ENCODE measurements at regions of chr2 and their contacts with region 1.

Region 1: GRCh38 chr2:127415593-127416505 is 2.4 kb upstream of the PROC start:
- DNase-seq: peak; percentile 30 to 62
- ATAC-seq: peak; percentile 53 to 83 (median 76)
- H3K4me3 ChIP-seq: peak overlapping the region in 9 of 10 donors; percentile 40 to 62 (median 54)
- H3K27ac ChIP-seq: peak overlapping the region in 1 of 10 donors; percentile 2
- H3K4me1 ChIP-seq: peaks cover 8 to 47% (median 20%) of the 10 kb centered on the region in 9 donors
- H3K27me3 ChIP-seq: peaks cover 0 to 24% (median 16%) of the 10 kb centered on the region in 7 donors
- CTCF ChIP-seq: peak; percentile 34 to 73 (median 61)

Region 2: DNA sequence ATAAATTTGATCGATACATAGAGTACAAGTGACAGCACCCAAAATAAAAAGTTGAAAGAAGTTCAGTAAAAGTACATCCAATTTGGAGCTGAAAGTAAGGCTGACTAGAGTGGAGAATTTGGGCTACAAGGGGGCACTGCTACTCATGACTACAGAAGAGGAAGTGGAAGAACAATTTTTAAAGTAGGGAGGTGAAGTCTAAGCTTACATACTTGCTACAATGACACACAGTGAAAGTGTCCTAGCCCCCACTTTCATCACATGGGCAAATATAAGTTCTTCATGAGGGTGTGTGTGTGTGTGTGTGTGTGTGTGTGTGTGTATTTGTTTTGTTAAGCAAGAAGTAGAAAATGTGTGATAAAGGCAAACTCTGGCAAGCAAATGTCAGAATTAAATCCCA is 73.7 kb before region 1 on chr2:
- intact Hi-C with region 1: loop called in 1 of 10 experiments (anchors 10 kb)
- DNase-seq: no peak
- ATAC-seq: no peak
- H3K4me3 ChIP-seq: no peak overlapping the region
- H3K27ac ChIP-seq: no peak overlapping the region
- H3K4me1 ChIP-seq: peaks cover 0 to 13% (median 0%) of the 10 kb centered on the region in 9 donors
- H3K27me3 ChIP-seq: no peaks in the 10 kb centered on the region
- CTCF ChIP-seq: no peak

Region 3: GRCh38 chr2:127365211-127365643 is 50.6 kb before region 1 on chr2:
- intact Hi-C with region 1: loop called in 2 of 10 experiments (anchors 10 kb)
- DNase-seq: no peak
- ATAC-seq: peak in 3 of 8 donors; percentile 7 to 26 (median 22)
- H3K4me3 ChIP-seq: no peak overlapping the region
- H3K27ac ChIP-seq: no peak overlapping the region
- H3K4me1 ChIP-seq: peaks cover 0 to 66% (median 24%) of the 10 kb centered on the region in 9 donors
- H3K27me3 ChIP-seq: no peaks in the 10 kb centered on the region
- CTCF ChIP-seq: no peak

Region 4: GRCh38 chr2:127471286-127471988 is 55.6 kb after region 1 on chr2:
- intact Hi-C with region 1: no loop called
- DNase-seq: no peak
- ATAC-seq: no peak
- H3K4me3 ChIP-seq: no peak overlapping the region
- H3K27ac ChIP-seq: no peak overlapping the region
- H3K4me1 ChIP-seq: no peaks in the 10 kb centered on the region
- H3K27me3 ChIP-seq: no peaks in the 10 kb centered on the region
- CTCF ChIP-seq: no peak

Measured in heart right ventricle (tissue), 16 donors.